HEK293T (cell line): ENCODE measurements at regions of chr4 and their contacts with region 1.

Region 1: GRCh38 chr4:88211473-88212252 is 53.2 kb upstream of the ABCG2 start:
- DNase-seq: peak; percentile 49

Region 2: GRCh38 chr4:87848622-87849351 is 362.9 kb before region 1 on chr4:
- CTCF ChIA-PET with region 1: interaction called, 20 read pairs
- POLR2A ChIA-PET with region 1: no interaction called
- DNase-seq: peak; percentile 61

Region 3: DNA sequence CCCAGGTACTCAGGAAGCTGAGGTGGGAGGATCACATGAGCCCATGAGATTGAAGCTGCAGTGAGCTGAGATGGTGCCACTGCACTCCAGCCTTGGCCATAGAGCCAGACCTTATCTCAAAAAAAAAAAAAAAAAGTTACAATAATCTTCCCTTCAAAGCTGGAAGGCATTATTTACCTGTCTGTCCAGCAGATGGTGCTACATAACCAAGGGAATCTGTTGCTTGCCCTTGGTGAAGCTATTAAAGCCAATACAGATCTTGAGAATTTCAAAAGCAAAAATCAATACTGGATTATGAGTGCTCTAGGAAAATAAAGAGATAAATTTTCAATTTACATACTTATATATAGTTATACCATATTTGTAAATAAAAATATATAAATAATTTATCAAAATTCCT is 178.4 kb before region 1 on chr4:
- CTCF ChIA-PET with region 1: interaction called, 23 read pairs
- POLR2A ChIA-PET with region 1: no interaction called
- DNase-seq: peak; percentile 62

Region 4: GRCh38 chr4:88230969-88231771 is 19.5 kb after region 1 on chr4:
- CTCF ChIA-PET with region 1: no interaction called
- POLR2A ChIA-PET with region 1: no interaction called
- DNase-seq: no peak

Region 5: GRCh38 chr4:88514557-88515511 is 303.2 kb after region 1 on chr4:
- CTCF ChIA-PET with region 1: interaction called, 11 read pairs
- POLR2A ChIA-PET with region 1: no interaction called
- DNase-seq: no peak